ENCODE measurements at regions of chrX and their contacts with region 1.

Region 1: DNA sequence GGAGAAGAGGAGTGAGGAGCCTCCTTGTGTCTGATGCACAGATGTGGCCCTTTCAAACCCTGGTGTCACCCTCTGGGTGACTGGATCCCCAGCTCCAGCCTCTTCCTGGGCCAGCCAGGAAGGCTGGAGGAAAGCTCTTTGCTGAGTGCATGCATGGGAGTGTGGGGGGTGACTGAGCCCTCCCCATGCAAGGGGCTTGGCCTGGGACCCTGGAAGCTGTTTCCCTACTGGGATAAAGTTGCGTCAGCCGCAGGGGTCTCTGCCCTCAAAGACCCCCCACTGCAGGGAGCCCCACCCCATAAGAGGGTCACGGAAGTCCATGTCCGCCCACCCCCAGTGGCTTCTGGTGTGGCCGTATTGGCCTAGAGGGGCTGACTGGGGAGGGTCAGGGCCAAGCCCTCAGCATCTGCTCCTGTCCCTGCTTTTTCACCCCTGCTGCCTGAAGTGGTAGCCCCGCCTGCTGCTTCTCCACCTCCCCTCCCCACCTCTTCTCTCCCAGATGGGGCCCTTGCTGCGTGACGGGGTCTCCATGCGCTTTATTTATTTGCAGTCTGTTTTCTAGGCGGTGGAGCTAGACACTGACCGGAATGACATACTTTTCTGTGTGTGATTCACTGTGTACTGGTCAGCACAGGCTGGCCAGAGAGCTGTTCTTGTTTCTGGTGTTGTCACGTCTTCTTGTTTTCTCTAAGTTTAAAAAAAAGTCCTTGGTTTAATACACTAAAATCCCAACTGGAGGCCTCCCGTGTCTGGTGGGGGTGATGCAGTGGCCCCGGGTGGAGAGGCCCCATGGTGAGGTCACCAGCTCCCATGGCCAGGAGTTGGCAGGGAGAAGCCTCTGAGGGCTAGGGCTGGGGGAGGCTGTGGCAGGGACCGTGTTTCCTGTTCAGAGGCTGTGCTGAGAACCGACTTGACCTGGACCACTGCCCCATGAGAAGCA is 3.6 kb downstream of the SMIM10L2A start:
- DNase-seq: peak in 1 of 10 donors; percentile 68

Region 2: DNA sequence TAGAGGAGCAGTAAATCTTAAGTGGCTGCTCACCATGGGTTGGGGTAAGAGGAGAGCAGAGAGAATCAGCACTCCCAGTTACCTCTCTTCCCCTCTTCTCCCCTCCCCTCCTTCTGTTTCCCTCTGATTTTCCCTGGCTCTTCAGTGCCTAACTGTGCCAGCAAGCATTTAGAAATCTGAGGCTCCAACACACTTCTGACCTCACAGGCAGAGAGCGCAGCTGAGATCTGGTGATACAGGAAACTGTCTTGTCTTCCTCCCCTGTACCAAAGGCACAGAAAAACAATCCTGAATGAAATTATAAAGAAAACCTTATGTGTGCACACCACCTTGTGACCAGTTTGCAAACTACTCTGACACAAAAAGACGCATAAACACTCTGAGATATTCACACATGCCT is 516.9 kb before region 1 on chrX:
- intact Hi-C with region 1: no loop called
- DNase-seq: no peak

Region 3: DNA sequence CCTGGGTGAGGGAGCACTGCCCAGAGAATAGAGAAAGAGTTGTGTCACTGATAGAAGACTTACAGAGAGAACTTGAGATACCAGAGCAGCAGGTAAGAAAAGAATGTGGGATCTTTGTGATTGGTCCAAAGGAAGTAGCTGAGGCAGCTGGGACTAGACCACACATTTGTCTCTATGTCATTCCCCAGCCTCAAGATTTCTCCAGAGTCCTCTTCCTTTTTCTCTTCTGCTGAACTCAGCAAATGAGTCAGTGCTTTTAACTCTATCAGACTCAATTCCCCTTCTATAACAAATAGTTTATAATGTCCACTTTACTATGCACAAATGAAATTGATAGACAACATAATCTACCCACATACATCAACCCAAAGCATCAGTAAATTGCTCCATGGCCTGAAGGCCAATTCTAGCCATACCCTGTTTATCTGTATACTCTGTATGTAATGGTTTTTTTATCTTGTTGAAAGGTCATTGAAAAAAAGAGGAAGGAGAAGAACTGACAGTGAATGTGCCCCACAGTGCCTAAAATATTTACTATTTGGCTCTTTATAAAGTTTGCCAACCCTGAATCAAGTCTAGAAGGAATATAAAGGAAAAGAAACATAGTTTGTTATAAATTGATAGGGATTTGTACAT is 77.8 kb before region 1 on chrX:
- intact Hi-C with region 1: loop called (anchors 2 kb)
- DNase-seq: no peak

Region 4: DNA sequence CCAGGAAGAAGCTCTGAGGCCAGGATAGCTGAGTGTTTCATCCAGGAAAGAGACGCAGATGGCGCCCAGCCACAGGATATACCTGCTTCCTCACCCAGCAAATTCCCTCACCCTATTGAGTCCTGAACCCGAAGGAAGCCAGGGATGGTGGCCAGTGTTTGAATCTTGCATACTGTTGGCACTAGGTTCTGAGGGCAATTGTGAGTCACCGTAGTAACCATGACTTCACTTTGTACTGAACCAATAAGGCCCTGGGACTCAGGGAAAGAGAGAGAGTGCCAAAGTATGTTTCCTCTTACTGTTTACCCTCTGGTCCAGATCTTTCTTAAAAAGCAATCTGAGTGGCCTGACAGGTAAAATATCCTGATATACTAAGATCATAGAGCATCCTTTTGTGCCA is 29.2 kb before region 1 on chrX:
- intact Hi-C with region 1: no loop called
- DNase-seq: no peak